ENCODE measurements at regions of chr15 and their contacts with region 1.

Region 1: DNA sequence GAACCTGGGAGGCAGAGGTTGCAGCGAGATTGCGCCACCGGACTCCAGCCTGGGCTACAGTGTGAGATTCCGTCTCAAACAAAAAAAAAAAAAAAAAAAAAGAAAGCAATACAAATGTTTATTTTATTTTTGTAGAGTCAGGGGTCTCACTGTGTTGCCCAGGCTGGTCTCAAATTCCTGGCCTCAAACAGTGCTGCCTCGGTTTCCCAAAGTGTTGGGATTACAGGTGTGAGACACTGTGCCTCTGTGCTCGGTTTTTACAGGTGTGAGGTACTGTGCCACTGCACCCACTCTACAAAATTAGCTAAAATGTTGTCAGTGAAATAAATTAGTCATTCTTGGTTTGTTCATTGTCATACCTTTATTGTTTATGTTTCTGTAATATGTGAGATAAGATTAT is 5.5 kb downstream of the PIAS1 start:
- DNase-seq: no peak
- H3K4me3 Mint-ChIP-seq: no peak overlapping the region
- H3K27ac Mint-ChIP-seq: no peak overlapping the region
- H3K4me1 Mint-ChIP-seq: peaks cover 36% of the 10 kb centered on the region
- H3K27me3 Mint-ChIP-seq: no peaks in the 10 kb centered on the region

Region 2: DNA sequence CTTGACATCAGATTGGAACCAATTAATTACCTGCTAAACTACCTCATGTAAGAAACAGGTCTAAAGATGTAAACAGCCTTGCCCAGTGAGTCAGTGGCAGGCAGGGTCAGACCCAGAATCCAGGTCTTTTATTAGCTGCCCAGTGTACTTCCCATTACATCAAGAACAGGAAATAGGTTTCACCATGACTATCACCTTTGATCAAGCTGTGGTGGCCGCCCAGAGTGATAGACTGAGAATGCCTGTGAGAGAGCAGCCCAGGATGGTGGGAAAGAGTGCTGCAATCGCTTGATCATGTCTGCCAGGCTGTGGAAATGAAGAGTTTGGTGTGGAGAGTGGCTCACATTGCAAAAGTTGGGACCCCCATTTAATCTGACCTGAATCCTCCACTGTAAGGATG is 66.8 kb before region 1 on chr15:
- CTCF ChIA-PET with region 1: no interaction called
- POLR2A ChIA-PET with region 1: interaction called, 11 read pairs
- DNase-seq: no peak
- H3K4me3 Mint-ChIP-seq: no peak overlapping the region
- H3K27ac Mint-ChIP-seq: no peak overlapping the region
- H3K4me1 Mint-ChIP-seq: no peaks in the 10 kb centered on the region
- H3K27me3 Mint-ChIP-seq: peaks cover 2% of the 10 kb centered on the region

Region 3: DNA sequence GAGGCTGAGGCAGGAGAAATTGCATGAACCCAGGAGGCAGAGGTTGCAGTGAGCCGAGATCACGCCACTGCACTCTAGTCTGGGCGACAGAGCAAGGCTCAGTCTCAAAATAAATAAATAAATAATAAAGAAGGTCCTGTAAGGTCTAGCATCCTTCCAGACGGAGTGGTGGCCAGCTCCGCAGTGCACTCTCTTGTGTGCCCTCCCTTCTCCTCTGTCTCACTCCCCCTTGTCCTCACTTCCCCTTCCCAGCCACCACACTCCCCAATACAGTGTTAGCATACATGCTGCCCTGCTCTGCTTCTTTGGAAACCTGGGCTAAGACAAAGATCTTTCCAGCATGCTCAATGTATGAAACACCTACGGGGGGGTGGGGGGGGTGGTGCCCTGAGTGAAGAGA is 173.3 kb after region 1 on chr15:
- CTCF ChIA-PET with region 1: no interaction called
- POLR2A ChIA-PET with region 1: no interaction called
- DNase-seq: no peak
- H3K4me3 Mint-ChIP-seq: no peak overlapping the region
- H3K27ac Mint-ChIP-seq: no peak overlapping the region
- H3K4me1 Mint-ChIP-seq: peaks cover 19% of the 10 kb centered on the region
- H3K27me3 Mint-ChIP-seq: peaks cover 8% of the 10 kb centered on the region